ENCODE measurements at regions of chr21 and their contacts with region 1.

Region 1: DNA sequence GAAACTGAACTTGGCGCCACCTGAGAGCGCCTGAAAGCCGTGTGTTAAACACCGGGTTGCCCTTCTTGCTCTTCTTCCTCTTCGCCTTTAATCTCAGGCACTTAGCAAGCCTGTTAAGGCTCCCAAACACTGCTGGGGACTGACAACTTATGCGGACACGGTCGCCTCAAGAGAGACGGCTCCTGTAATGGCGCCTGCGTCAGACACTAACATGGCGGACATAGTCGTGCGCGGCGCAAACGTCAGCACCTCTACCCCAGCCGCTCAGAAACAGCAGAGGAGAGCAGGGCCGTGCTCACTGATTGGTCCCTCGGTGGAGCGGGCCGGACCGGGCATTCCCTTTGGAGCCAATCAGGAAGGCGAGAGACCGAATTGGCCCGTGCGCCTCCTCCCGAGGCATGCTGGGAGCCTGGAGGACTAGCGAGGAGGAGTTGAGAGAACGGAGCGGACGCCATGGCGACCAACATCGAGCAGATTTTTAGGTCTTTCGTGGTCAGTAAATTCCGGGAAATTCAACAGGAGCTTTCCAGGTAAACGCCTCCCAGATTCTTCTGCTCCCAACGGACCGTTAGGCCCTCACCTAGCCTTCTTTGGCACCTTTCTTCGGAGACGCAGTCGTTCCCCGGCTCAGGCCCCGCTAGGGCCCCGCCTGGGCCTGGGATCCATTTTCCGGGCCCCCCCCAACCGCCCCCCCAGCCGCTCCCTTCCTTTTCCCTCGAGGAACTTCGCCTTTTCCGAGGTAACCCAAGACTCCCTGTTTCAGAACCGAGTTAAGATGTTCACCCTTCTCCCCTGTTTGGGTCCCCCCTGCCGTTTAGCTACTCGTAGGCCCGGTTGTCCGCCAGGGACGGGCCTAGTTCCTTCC is at the start of gene SON:
- DNase-seq: peak; percentile 93 to 99 (median 96)
- ATAC-seq: peak; percentile 89
- H3K4me3 ChIP-seq: peak within 1 kb of the TSS; percentile 87 to 88
- H3K4me3 Mint-ChIP-seq: peak within 1 kb of the TSS; percentile 96
- H3K27ac ChIP-seq: peak within 1 kb of the TSS; percentile 99
- H3K27ac Mint-ChIP-seq: peak within 1 kb of the TSS; percentile 99
- H3K4me1 ChIP-seq: peaks cover 44% of the 10 kb centered on the region
- H3K4me1 Mint-ChIP-seq: peaks cover 55% of the 10 kb centered on the region
- H3K27me3 ChIP-seq: no peaks in the 10 kb centered on the region
- H3K27me3 Mint-ChIP-seq: no peaks in the 10 kb centered on the region
- CTCF ChIP-seq: no peak
- total RNA-seq, gene SON: 418 to 422 TPM

Region 2: DNA sequence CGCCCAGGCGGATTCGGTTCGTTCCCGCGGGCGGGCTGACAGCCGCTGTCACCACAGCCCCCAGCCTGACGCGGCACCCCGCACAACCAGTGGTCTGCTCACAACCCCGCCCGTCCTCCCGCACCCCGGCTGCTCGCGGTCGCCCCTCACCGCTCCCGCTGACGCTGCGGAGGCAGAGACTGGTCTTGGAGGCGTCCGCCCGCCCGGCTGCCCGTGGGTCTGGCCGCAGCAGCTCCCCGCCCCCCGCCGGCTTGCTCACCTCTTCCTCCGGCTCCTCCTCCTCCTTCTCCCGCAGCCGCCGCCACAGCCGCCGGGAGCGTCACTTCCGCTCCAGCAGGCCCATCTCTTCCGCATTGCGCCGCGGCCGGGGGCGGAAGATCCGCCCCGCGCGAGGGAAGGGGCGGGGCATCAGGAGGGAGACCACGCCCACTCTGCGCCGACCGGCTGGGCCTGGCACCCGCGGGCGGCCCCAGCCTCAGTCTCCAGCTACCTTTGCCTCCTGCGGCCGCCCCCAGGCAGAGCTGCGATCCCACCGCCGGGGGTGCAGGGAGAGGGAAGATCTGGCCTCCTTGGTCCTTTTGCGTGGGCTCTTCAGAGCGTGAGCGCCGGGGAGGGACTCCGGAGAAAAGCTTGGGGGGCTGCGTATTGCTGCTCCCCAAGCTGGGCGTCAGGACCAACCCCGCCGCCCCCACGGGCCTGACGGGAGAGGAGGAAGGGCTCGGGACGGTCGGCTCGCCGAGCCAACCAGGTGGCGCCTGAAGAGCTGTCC is 815.0 kb before region 1 on chr21 and contains the start of gene SYNJ1:
- CTCF ChIA-PET with region 1: no interaction called
- POLR2A ChIA-PET with region 1: no interaction called
- intact Hi-C with region 1: loop called in 1 of 2 experiments (anchors 5 kb)
- DNase-seq: peak; percentile 86 to 96 (median 93)
- ATAC-seq: peak; percentile 86
- H3K4me3 ChIP-seq: peak within 1 kb of the TSS; percentile 86 to 99
- H3K4me3 Mint-ChIP-seq: peak within 1 kb of the TSS; percentile 94
- H3K27ac ChIP-seq: peak within 1 kb of the TSS; percentile 76 to 82
- H3K27ac Mint-ChIP-seq: peak within 1 kb of the TSS; percentile 93
- H3K4me1 ChIP-seq: peaks cover 45% of the 10 kb centered on the region
- H3K4me1 Mint-ChIP-seq: peaks cover 61% of the 10 kb centered on the region
- H3K27me3 ChIP-seq: no peaks in the 10 kb centered on the region
- H3K27me3 Mint-ChIP-seq: no peaks in the 10 kb centered on the region
- CTCF ChIP-seq: no peak
- total RNA-seq, gene SYNJ1: 10.5 to 10.7 TPM

Region 3: GRCh38 chr21:33394260-33394659 is 148.6 kb before region 1 on chr21:
- CTCF ChIA-PET with region 1: no interaction called
- POLR2A ChIA-PET with region 1: no interaction called
- intact Hi-C with region 1: no loop called
- DNase-seq: peak in 1 of 9 experiments; percentile 38
- ATAC-seq: no peak
- H3K4me3 ChIP-seq: no peak overlapping the region
- H3K4me3 Mint-ChIP-seq: no peak overlapping the region
- H3K27ac ChIP-seq: no peak overlapping the region
- H3K27ac Mint-ChIP-seq: no peak overlapping the region
- H3K4me1 ChIP-seq: no peaks in the 10 kb centered on the region
- H3K4me1 Mint-ChIP-seq: no peaks in the 10 kb centered on the region
- H3K27me3 ChIP-seq: peaks cover 0 to 31% of the 10 kb centered on the region in 2 experiments
- H3K27me3 Mint-ChIP-seq: peaks cover 5% of the 10 kb centered on the region
- CTCF ChIP-seq: no peak

Region 4: GRCh38 chr21:33479679-33480480 is 63.0 kb before region 1 on chr21 and contains the start of gene TMEM50B:
- CTCF ChIA-PET with region 1: interaction called, 6 read pairs
- POLR2A ChIA-PET with region 1: interaction called, 57 read pairs
- intact Hi-C with region 1: loop called (anchors 1 kb)
- DNase-seq: peak; percentile 94 to 98 (median 95)
- ATAC-seq: peak; percentile 87
- H3K4me3 ChIP-seq: peak within 1 kb of the TSS; percentile 79 to 88
- H3K4me3 Mint-ChIP-seq: peak within 1 kb of the TSS; percentile 89
- H3K27ac ChIP-seq: peak within 1 kb of the TSS; percentile 83 to 87
- H3K27ac Mint-ChIP-seq: peak within 1 kb of the TSS; percentile 96
- H3K4me1 ChIP-seq: peaks cover 13% of the 10 kb centered on the region
- H3K4me1 Mint-ChIP-seq: peaks cover 28% of the 10 kb centered on the region
- H3K27me3 ChIP-seq: no peaks in the 10 kb centered on the region
- H3K27me3 Mint-ChIP-seq: no peaks in the 10 kb centered on the region
- CTCF ChIP-seq: peak; percentile 31
- total RNA-seq, gene TMEM50B: 32.6 to 34.0 TPM

Region 5: GRCh38 chr21:33531007-33531406 is 11.9 kb before region 1 on chr21:
- CTCF ChIA-PET with region 1: no interaction called
- POLR2A ChIA-PET with region 1: no interaction called
- intact Hi-C with region 1: no loop called
- DNase-seq: no peak
- ATAC-seq: no peak
- H3K4me3 ChIP-seq: no peak overlapping the region
- H3K4me3 Mint-ChIP-seq: no peak overlapping the region
- H3K27ac ChIP-seq: no peak overlapping the region
- H3K27ac Mint-ChIP-seq: no peak overlapping the region
- H3K4me1 ChIP-seq: no peaks in the 10 kb centered on the region
- H3K4me1 Mint-ChIP-seq: no peaks in the 10 kb centered on the region
- H3K27me3 ChIP-seq: no peaks in the 10 kb centered on the region
- H3K27me3 Mint-ChIP-seq: no peaks in the 10 kb centered on the region
- CTCF ChIP-seq: no peak

Region 6: GRCh38 chr21:33561373-33561772 is 18.5 kb after region 1 on chr21:
- CTCF ChIA-PET with region 1: interaction called, 5 read pairs
- POLR2A ChIA-PET with region 1: interaction called, 35 read pairs
- intact Hi-C with region 1: loop called in 1 of 2 experiments (anchors 2 kb)
- DNase-seq: no peak
- ATAC-seq: no peak
- H3K4me3 ChIP-seq: no peak overlapping the region
- H3K4me3 Mint-ChIP-seq: no peak overlapping the region
- H3K27ac ChIP-seq: no peak overlapping the region
- H3K27ac Mint-ChIP-seq: peak overlapping the region; percentile 47
- H3K4me1 ChIP-seq: peaks cover 19% of the 10 kb centered on the region
- H3K4me1 Mint-ChIP-seq: peaks cover 65% of the 10 kb centered on the region
- H3K27me3 ChIP-seq: no peaks in the 10 kb centered on the region
- H3K27me3 Mint-ChIP-seq: no peaks in the 10 kb centered on the region
- CTCF ChIP-seq: no peak

Region 7: DNA sequence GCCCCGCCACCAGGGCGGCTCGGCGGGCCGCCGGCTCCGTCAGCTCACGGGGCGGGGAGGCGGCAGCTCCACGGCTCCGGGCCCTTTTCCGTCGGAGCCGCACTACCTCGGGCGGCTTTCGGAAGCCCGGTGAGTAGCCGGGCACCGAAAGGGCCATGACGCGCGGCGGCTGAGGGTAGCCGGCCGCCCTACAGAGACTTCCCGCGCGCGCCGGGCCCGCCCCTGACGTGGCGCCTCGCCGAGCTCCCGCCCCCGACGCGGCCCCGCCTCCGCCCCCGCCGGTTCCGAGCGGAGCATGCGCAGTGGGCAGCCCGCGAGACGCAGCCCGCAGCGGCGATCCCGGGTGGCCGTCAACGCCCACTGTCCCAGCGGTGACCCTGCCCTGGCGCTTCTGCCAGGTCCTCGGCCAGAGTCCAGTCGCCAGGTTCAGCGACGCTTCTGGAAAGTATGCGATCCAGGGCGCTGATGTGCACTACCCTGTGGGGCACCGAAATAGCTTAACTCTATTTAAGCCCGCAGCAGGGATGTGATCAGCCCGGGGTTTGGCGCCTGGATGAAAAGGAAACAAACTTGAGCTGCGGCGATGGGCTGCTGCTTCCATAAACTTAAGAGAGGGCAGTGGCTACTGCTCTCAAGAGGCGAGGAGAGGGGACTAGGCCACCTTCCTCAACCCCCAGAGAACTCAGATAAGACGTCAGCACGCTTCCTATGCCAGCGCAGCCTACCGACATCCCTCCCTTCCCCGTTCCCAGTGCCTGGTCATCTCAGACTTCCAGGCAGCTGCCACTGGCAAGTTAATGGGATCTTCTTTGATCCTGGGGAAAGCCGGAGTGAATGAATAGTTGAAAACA is 45.8 kb after region 1 on chr21 and contains the start of gene DONSON:
- CTCF ChIA-PET with region 1: interaction called, 3 read pairs
- POLR2A ChIA-PET with region 1: interaction called, 23 read pairs
- intact Hi-C with region 1: loop called (anchors 1 kb)
- DNase-seq: peak; percentile 72 to 94 (median 87)
- ATAC-seq: peak; percentile 94
- H3K4me3 ChIP-seq: peak within 1 kb of the TSS; percentile 82 to 91
- H3K4me3 Mint-ChIP-seq: peak within 1 kb of the TSS; percentile 95
- H3K27ac ChIP-seq: peak within 1 kb of the TSS; percentile 53 to 61
- H3K27ac Mint-ChIP-seq: peak within 1 kb of the TSS; percentile 87
- H3K4me1 ChIP-seq: peaks cover 14% of the 10 kb centered on the region
- H3K4me1 Mint-ChIP-seq: peaks cover 16% of the 10 kb centered on the region
- H3K27me3 ChIP-seq: no peaks in the 10 kb centered on the region
- H3K27me3 Mint-ChIP-seq: no peaks in the 10 kb centered on the region
- CTCF ChIP-seq: no peak
- total RNA-seq, gene DONSON: 11.0 to 11.9 TPM

Region 8: DNA sequence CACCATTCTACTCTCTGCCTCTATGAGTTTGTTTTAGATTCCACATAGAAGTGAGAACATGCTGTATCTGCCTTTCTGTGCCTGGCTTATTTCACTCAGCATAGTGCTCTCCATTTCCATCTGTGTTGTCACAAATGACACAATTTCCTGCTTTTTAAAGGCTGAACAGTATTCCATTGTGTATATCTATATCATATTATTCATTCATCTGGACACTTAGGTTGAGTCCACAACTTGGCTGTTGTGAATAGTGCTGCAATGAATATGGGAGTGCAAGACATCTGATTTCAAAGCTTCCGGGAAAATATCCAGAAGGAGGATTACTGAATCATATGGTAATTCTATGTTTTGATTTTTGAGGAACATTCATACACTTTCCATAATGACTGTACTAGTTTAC is 65.7 kb after region 1 on chr21:
- CTCF ChIA-PET with region 1: interaction called, 3 read pairs
- POLR2A ChIA-PET with region 1: no interaction called
- intact Hi-C with region 1: loop called in 1 of 2 experiments (anchors 5 kb)
- DNase-seq: no peak
- ATAC-seq: no peak
- H3K4me3 ChIP-seq: no peak overlapping the region
- H3K4me3 Mint-ChIP-seq: no peak overlapping the region
- H3K27ac ChIP-seq: no peak overlapping the region
- H3K27ac Mint-ChIP-seq: no peak overlapping the region
- H3K4me1 ChIP-seq: no peaks in the 10 kb centered on the region
- H3K4me1 Mint-ChIP-seq: peaks cover 3% of the 10 kb centered on the region
- H3K27me3 ChIP-seq: no peaks in the 10 kb centered on the region
- H3K27me3 Mint-ChIP-seq: no peaks in the 10 kb centered on the region
- CTCF ChIP-seq: no peak